T-cell (primary cell): ENCODE measurements at regions of chr12 and their contacts with region 1.

Region 1: DNA sequence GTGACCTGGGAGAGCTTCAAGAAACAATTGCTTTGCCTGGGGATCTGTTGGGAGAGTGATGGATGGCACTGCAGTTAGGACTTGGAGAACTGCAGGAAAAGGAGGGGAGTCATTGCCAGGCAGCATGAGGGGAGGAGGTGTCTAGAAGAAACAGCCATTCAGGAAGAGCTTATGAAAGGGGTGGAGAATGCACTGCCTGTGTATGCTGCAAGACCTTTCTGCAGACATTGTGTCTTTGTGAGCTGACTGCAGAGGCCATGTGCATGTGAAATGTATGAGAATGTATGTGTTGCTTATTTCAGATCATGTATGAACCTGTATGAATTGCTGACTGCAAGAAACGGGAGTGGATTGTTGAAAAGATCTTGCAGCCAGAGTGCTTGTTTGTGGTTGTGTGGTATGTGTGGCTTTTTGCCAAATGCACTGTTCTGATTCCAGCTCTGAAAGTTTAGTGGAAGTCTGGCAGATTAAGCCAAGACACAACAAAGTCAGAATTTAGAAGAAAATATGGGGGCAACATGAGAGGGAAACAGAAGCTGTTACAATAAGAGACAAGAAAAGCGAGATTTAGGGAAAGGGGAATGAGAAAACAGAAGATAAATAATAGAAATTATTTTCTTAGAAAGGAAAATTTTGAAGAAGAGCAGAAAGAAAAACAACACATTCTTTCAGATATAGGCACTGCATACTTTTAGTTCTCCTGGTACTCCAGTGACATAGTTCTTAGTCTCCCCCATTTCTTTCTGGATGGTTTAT is 9.8 kb upstream of the RIMKLB start:
- DNase-seq: peak in 1 of 35 experiments; percentile 20
- ATAC-seq: peak; percentile 48 to 61 (median 58)
- H3K4me3 ChIP-seq: no peak overlapping the region
- H3K4me3 Mint-ChIP-seq: no peak overlapping the region
- H3K27ac ChIP-seq: no peak overlapping the region
- H3K27ac Mint-ChIP-seq: no peak overlapping the region
- H3K4me1 ChIP-seq: peaks cover 5 to 15% of the 10 kb centered on the region in 2 experiments
- H3K4me1 Mint-ChIP-seq: peaks cover 10 to 15% (median 12%) of the 10 kb centered on the region in 3 donors
- H3K27me3 ChIP-seq: no peaks in the 10 kb centered on the region
- H3K27me3 Mint-ChIP-seq: no peaks in the 10 kb centered on the region

Region 2: GRCh38 chr12:8675591-8676036 is 12.4 kb before region 1 on chr12:
- CTCF ChIA-PET with region 1: no interaction called
- POLR2A ChIA-PET with region 1: interaction called in 1 of 2 experiments, 13 read pairs
- DNase-seq: no peak
- ATAC-seq: peak in 1 of 4 experiments; percentile 14
- H3K4me3 ChIP-seq: no peak overlapping the region
- H3K4me3 Mint-ChIP-seq: no peak overlapping the region
- H3K27ac ChIP-seq: no peak overlapping the region
- H3K27ac Mint-ChIP-seq: peak overlapping the region in 1 of 2 donors; percentile 54
- H3K4me1 ChIP-seq: no peaks in the 10 kb centered on the region
- H3K4me1 Mint-ChIP-seq: peaks cover 6 to 11% (median 10%) of the 10 kb centered on the region in 3 donors
- H3K27me3 ChIP-seq: no peaks in the 10 kb centered on the region
- H3K27me3 Mint-ChIP-seq: peaks cover 0 to 5% of the 10 kb centered on the region in 2 donors

Region 3: GRCh38 chr12:8796831-8797626 is 109.0 kb after region 1 on chr12:
- CTCF ChIA-PET with region 1: no interaction called
- POLR2A ChIA-PET with region 1: no interaction called
- DNase-seq: no peak
- ATAC-seq: no peak
- H3K4me3 ChIP-seq: no peak overlapping the region
- H3K4me3 Mint-ChIP-seq: no peak overlapping the region
- H3K27ac ChIP-seq: no peak overlapping the region
- H3K27ac Mint-ChIP-seq: no peak overlapping the region
- H3K4me1 ChIP-seq: no peaks in the 10 kb centered on the region
- H3K4me1 Mint-ChIP-seq: no peaks in the 10 kb centered on the region
- H3K27me3 ChIP-seq: peaks cover 0 to 5% of the 10 kb centered on the region in 2 experiments
- H3K27me3 Mint-ChIP-seq: no peaks in the 10 kb centered on the region